ENCODE measurements at regions of chr18 and their contacts with region 1.

Region 1: GRCh38 chr18:32289483-32290075 is 99.7 kb downstream of the MEP1B start:
- DNase-seq: no peak
- ATAC-seq: peak in 1 of 2 donors; percentile 65

Region 2: DNA sequence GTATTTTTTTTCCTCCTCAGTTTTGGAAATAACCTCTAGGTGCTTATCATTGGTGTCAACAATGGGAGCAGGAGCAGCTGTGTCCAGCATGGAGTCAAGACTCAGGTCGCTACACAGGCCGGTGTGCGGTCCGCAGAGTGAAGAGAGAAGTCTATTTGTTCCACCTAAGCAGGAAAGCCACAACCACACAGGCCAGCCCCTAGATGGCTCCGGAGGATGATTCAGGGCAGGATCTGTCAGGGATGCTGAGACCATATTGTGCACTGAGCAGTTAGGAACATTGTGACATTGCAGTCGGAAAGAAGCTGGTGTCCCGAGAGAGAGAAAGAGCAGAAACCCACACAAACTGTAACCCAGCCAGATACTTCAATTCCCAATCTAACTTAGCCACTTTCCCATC is 44.2 kb after region 1 on chr18:
- intact Hi-C with region 1: loop called in 1 of 2 experiments (anchors 10 kb)
- DNase-seq: no peak
- ATAC-seq: peak; percentile 62 to 81

Region 3: GRCh38 chr18:32366586-32367538 is 77.3 kb after region 1 on chr18:
- intact Hi-C with region 1: no loop called
- DNase-seq: no peak
- ATAC-seq: peak in 1 of 2 donors; percentile 29

Region 4: DNA sequence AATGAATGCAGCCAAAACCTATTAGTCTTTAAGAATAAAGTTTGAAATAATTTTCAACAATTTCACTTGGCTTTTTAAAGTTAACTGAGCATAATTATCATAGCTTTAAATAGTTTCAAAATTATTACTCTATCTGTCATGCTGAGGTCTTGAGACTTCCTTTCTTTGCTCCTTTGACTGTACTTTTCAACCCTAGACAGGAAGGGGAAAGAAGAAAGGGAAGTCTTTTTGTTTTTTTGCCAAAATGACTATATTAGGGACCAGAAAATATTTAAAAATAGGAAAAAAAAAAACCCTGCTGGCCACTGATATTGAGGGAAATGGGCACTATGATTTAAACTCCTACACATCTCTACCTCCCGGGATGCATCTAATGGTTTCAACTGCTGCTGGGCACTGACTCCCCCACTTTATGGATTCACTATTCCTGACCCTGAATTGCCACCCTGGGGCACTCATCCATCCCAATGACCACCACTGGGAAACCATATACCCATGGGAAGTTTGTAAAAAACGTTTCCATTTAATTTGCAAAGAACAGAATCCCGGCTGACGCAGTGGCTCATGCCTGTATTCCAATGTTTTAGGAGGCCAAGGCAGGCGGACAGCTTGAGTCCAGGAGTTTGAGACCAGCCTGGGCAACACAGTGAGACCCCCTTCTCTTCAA is 130.6 kb after region 1 on chr18:
- intact Hi-C with region 1: no loop called
- DNase-seq: no peak
- ATAC-seq: no peak